Prostate gland (tissue), 2 donors: ENCODE measurements at regions of chr6 and their contacts with region 1.

Region 1: GRCh38 chr6:100479179-100480035 is 14.7 kb upstream of the SIM1 start:
- DNase-seq: no peak
- H3K4me3 ChIP-seq: no peak overlapping the region
- H3K27ac ChIP-seq: no peak overlapping the region
- H3K4me1 ChIP-seq: no peaks in the 10 kb centered on the region
- H3K27me3 ChIP-seq: no peaks in the 10 kb centered on the region
- CTCF ChIP-seq: peak in 3 of 4 experiments; percentile 48 to 62 (median 53)
- POLR2A ChIP-seq: no peak

Region 2: GRCh38 chr6:100126790-100127484 is 352.5 kb before region 1 on chr6:
- intact Hi-C with region 1: loop called (anchors 10 kb)
- DNase-seq: no peak
- H3K4me3 ChIP-seq: no peak overlapping the region
- H3K27ac ChIP-seq: no peak overlapping the region
- H3K4me1 ChIP-seq: no peaks in the 10 kb centered on the region
- H3K27me3 ChIP-seq: no peaks in the 10 kb centered on the region
- CTCF ChIP-seq: no peak
- POLR2A ChIP-seq: no peak

Region 3: DNA sequence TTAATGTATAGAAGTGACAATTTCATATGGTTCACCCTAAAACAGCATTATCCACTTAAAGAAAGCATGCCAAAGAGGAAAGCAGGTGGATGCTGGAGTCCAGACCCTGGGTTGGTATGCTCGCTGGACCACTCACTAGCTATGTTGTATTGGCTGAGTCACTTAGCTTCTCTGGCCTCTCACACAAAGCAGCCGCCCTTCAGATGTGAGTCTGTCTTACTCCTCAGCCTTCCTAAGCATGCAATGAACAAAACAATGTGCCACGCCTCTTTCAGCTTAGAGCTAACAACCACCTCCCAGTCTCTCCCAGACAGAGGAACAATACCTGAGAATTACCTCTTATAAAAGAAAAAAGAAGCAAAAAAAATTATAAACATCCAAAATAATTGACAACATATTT is 44.1 kb before region 1 on chr6:
- intact Hi-C with region 1: no loop called
- DNase-seq: no peak
- H3K4me3 ChIP-seq: no peak overlapping the region
- H3K27ac ChIP-seq: no peak overlapping the region
- H3K4me1 ChIP-seq: no peaks in the 10 kb centered on the region
- H3K27me3 ChIP-seq: no peaks in the 10 kb centered on the region
- CTCF ChIP-seq: no peak
- POLR2A ChIP-seq: no peak